ENCODE measurements at regions of chr5 and their contacts with region 1.

Region 1: GRCh38 chr5:173887610-173888472 is at the start of gene CPEB4:
- DNase-seq: peak; percentile 99
- ATAC-seq: peak; percentile 90
- H3K4me3 ChIP-seq: peak within 1 kb of the TSS; percentile 94
- H3K27ac ChIP-seq: peak within 1 kb of the TSS; percentile 100
- H3K4me1 ChIP-seq: peaks cover 30% of the 10 kb centered on the region
- H3K27me3 ChIP-seq: no peaks in the 10 kb centered on the region
- CTCF ChIP-seq: no peak
- EP300 ChIP-seq: peak in 1 of 2 experiments; percentile 41; a peak in 1 of 4 replicates
- POLR2A ChIP-seq: peak; percentile 92
- RAD21 ChIP-seq: 0 out of 2 replicates have a peak, but pooled peaks have one; percentile 10
- polyA plus RNA-seq, gene CPEB4: 6.9 to 20.3 TPM

Region 2: DNA sequence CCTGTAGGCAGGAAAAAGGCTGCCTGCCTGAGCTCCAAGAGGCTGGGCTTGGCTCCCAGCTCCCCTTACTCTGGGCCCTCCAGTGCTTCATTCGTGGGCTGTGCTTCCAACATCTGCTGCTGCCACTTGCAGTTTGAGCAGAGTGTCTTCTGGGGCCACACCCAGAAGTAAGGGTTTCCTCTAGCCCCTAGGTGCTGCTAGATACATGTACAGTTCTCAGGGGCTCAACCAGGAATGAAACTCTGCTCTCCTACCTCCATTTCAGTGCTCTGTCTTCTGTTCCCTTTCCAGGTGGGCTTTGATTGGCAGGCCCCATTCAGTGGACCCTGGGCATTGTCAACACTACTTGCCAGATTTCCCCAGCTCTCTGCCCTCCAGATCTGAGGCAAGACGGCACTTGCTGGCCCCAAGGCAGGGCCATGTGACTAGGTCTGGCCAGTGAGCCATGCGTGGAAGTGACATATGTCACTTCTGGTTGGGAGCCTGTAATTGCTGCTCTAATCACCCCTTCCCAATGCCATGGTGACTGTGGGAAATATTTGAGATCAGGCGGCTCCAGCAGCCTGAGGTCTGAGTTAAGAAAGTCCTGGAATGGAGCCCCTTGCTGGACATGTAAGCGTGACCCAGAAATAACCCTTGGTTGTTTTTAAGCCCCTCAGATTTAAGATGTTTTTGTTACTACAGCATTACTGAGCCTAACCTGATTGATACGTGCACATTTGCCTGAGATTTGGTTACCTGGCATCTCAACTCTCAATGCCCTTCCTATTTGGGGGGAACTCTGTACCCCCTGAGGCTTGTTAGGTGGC is 261.9 kb before region 1 on chr5:
- CTCF ChIA-PET with region 1: interaction called, 23 read pairs
- POLR2A ChIA-PET with region 1: interaction called, 3 read pairs
- RAD21 ChIA-PET with region 1: interaction called, 15 read pairs
- SMC1A ChIA-PET with region 1: interaction called, 8 read pairs
- in situ Hi-C with region 1: no loop called
- intact Hi-C with region 1: no loop called
- DNase-seq: no peak
- ATAC-seq: peak; percentile 81
- H3K4me3 ChIP-seq: no peak overlapping the region
- H3K27ac ChIP-seq: no peak overlapping the region
- H3K4me1 ChIP-seq: peaks cover 9% of the 10 kb centered on the region
- H3K27me3 ChIP-seq: no peaks in the 10 kb centered on the region
- CTCF ChIP-seq: peak; percentile 60 to 71 (median 61)
- EP300 ChIP-seq: no peak
- POLR2A ChIP-seq: no peak
- RAD21 ChIP-seq: peak; percentile 85

Region 3: GRCh38 chr5:173745123-173745522 is 142.7 kb before region 1 on chr5:
- CTCF ChIA-PET with region 1: interaction called, 3 read pairs
- POLR2A ChIA-PET with region 1: interaction called, 6 read pairs
- RAD21 ChIA-PET with region 1: interaction called, 7 read pairs
- SMC1A ChIA-PET with region 1: interaction called, 8 read pairs
- in situ Hi-C with region 1: no loop called
- intact Hi-C with region 1: loop called (anchors 2 kb)
- DNase-seq: peak; percentile 47
- ATAC-seq: peak; percentile 64
- H3K4me3 ChIP-seq: no peak overlapping the region
- H3K27ac ChIP-seq: peak overlapping the region; percentile 95
- H3K4me1 ChIP-seq: peaks cover 54% of the 10 kb centered on the region
- H3K27me3 ChIP-seq: no peaks in the 10 kb centered on the region
- CTCF ChIP-seq: no peak
- EP300 ChIP-seq: no peak; a peak in 1 of 4 replicates
- POLR2A ChIP-seq: no peak
- RAD21 ChIP-seq: 0 out of 2 replicates have a peak, but pooled peaks have one; percentile 0

Region 4: DNA sequence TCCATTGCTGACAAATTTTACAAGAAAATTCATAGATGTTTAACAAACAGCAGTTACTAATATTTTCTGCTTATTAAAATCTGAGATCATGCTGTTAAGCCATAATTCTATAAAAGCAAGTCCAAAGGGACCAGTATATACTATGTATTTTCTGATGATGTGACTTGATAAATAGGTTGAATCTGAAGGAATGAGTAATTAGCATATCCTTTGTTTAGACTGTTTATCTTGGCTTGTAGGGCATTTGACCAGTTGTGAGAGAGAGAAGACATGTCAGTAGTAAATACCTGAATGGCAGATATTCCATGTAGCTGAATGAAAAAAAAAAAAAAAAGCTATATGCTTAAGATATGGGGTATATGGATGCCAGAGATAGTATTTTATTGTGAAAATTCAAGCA is 14.9 kb after region 1 on chr5:
- CTCF ChIA-PET with region 1: interaction called, 36 read pairs
- POLR2A ChIA-PET with region 1: interaction called, 105 read pairs
- RAD21 ChIA-PET with region 1: interaction called, 104 read pairs
- SMC1A ChIA-PET with region 1: interaction called, 361 read pairs
- in situ Hi-C with region 1: no loop called
- intact Hi-C with region 1: no loop called
- DNase-seq: no peak
- ATAC-seq: no peak
- H3K4me3 ChIP-seq: 0 out of 2 replicates have a peak overlapping the region, but pooled peaks have one; percentile 0
- H3K27ac ChIP-seq: peak overlapping the region; percentile 59
- H3K4me1 ChIP-seq: peaks cover 28% of the 10 kb centered on the region
- H3K27me3 ChIP-seq: no peaks in the 10 kb centered on the region
- CTCF ChIP-seq: no peak
- EP300 ChIP-seq: no peak
- POLR2A ChIP-seq: no peak
- RAD21 ChIP-seq: no peak

Region 5: GRCh38 chr5:173917788-173918786 is 30.2 kb after region 1 on chr5:
- CTCF ChIA-PET with region 1: interaction called, 104 read pairs
- POLR2A ChIA-PET with region 1: interaction called, 40 read pairs
- RAD21 ChIA-PET with region 1: interaction called, 142 read pairs
- SMC1A ChIA-PET with region 1: interaction called, 361 read pairs
- in situ Hi-C with region 1: no loop called
- intact Hi-C with region 1: no loop called
- DNase-seq: peak; percentile 86
- ATAC-seq: peak; percentile 93
- H3K4me3 ChIP-seq: peak overlapping the region; percentile 77
- H3K27ac ChIP-seq: peak overlapping the region; percentile 76
- H3K4me1 ChIP-seq: peaks cover 18% of the 10 kb centered on the region
- H3K27me3 ChIP-seq: no peaks in the 10 kb centered on the region
- CTCF ChIP-seq: peak in 2 of 3 experiments; percentile 9 to 42; a peak in 2 of 6 replicates
- EP300 ChIP-seq: no peak
- POLR2A ChIP-seq: peak; percentile 85
- RAD21 ChIP-seq: peak; percentile 47

Region 6: DNA sequence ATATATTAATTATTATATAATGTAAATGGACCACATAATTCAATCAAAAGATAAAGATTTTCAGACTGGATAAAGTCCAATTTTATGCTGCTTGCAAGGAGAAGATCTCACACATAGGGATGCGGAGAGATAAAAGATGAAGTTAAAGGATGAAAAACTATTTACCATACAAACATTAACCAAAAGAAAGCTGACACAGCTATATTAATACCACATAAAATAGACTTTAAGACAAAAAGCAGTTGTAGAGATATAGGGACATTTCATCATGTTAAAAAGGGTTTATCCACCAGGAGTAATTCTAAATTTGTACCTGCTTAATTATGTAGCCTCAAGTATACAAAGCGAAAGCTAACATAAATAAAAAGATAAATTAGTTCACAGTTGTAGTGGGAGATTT is 142.4 kb after region 1 on chr5:
- CTCF ChIA-PET with region 1: no interaction called
- POLR2A ChIA-PET with region 1: no interaction called
- RAD21 ChIA-PET with region 1: no interaction called
- SMC1A ChIA-PET with region 1: no interaction called
- in situ Hi-C with region 1: no loop called
- intact Hi-C with region 1: no loop called
- DNase-seq: no peak
- ATAC-seq: no peak
- H3K4me3 ChIP-seq: no peak overlapping the region
- H3K27ac ChIP-seq: no peak overlapping the region
- H3K4me1 ChIP-seq: no peaks in the 10 kb centered on the region
- H3K27me3 ChIP-seq: no peaks in the 10 kb centered on the region; a peak in 1 of 4 replicates
- CTCF ChIP-seq: no peak
- EP300 ChIP-seq: no peak
- POLR2A ChIP-seq: no peak
- RAD21 ChIP-seq: no peak

Measured in GM12878 (cell line).